Body of pancreas (tissue), 4 donors: ENCODE measurements at regions of chr5 and their contacts with region 1.

Region 1: DNA sequence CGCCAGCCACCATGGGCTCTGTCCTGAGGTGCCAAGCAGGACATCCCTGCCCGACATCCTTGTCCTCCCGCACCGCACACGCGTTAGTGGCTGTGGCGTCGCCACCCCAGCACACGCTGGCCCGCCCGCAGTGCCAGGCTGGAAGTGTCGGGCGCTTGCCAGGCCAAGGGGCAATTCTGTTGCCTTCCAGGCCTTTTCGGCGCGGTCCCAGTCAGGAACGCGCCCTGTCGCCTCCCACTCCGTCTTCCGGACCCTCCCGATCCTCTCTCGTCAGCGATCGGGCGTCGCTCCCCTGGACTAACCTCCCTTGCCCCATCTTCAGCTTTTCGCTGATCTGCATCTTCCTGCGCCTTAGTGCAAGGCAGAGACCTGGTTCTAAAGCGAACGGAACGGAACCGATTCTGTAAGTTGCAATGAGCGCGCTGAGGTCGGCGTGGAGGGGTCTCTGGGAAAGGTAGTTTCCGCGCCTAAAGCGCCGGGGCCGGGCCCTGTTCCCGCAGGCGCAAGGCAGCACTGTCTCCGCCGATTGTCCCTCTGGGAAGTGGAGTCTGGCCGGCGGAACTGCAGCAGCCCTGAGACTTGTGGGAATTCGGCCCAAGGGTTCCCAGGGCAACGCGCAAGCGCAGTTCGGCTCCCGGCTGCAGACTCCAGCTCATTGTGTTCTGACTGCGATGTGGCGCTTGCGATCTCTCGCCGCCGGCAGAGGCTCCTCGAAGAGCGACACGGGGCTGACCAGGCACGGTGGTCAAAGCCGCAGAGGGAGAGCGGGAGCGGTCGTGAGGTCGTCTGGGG is at the start of gene ZNF454:
- DNase-seq: peak; percentile 96 to 97 (median 96)
- ATAC-seq: peak; percentile 99
- H3K4me3 ChIP-seq: peak within 1 kb of the TSS; percentile 52 to 73
- H3K27ac ChIP-seq: peak within 1 kb of the TSS; percentile 17 to 79 (median 66)
- H3K4me1 ChIP-seq: peaks cover 22% of the 10 kb centered on the region
- H3K27me3 ChIP-seq: no peaks in the 10 kb centered on the region
- CTCF ChIP-seq: peak in 2 of 7 experiments; percentile 6 to 7
- POLR2A ChIP-seq: peak; percentile 14 to 78 (median 68)
- total RNA-seq, gene ZNF454: 4.2 to 8.2 TPM

Region 2: GRCh38 chr5:178838695-178839685 is 101.8 kb before region 1 on chr5:
- intact Hi-C with region 1: no loop called
- DNase-seq: peak; percentile 69 to 88 (median 86)
- ATAC-seq: peak; percentile 90
- H3K4me3 ChIP-seq: no peak overlapping the region
- H3K27ac ChIP-seq: no peak overlapping the region
- H3K4me1 ChIP-seq: no peaks in the 10 kb centered on the region
- H3K27me3 ChIP-seq: no peaks in the 10 kb centered on the region
- CTCF ChIP-seq: peak; percentile 51 to 90 (median 77)
- POLR2A ChIP-seq: no peak

Region 3: GRCh38 chr5:179023528-179024430 is 83.0 kb after region 1 on chr5 and contains the start of gene ZNF879:
- intact Hi-C with region 1: loop called (anchors 5 kb)
- DNase-seq: peak; percentile 95 to 96 (median 96)
- ATAC-seq: peak; percentile 99
- H3K4me3 ChIP-seq: peak within 1 kb of the TSS; percentile 34 to 83
- H3K27ac ChIP-seq: peak within 1 kb of the TSS; percentile 74 to 96 (median 84)
- H3K4me1 ChIP-seq: peaks cover 11% of the 10 kb centered on the region
- H3K27me3 ChIP-seq: no peaks in the 10 kb centered on the region
- CTCF ChIP-seq: peak in 1 of 7 experiments; percentile 16
- POLR2A ChIP-seq: peak; percentile 14 to 47 (median 46)
- total RNA-seq, gene ZNF879: 1.6 to 2.1 TPM

Region 4: GRCh38 chr5:179265514-179266290 is 324.9 kb after region 1 on chr5:
- intact Hi-C with region 1: no loop called
- DNase-seq: peak; percentile 44 to 76 (median 64)
- ATAC-seq: peak; percentile 72
- H3K4me3 ChIP-seq: no peak overlapping the region
- H3K27ac ChIP-seq: peak overlapping the region in 1 of 4 donors; percentile 50
- H3K4me1 ChIP-seq: peaks cover 6% of the 10 kb centered on the region
- H3K27me3 ChIP-seq: no peaks in the 10 kb centered on the region
- CTCF ChIP-seq: no peak
- POLR2A ChIP-seq: no peak